ENCODE measurements at regions of chr5 and their contacts with region 1.

Region 1: GRCh38 chr5:78269088-78269703 is 25.3 kb downstream of the AP3B1 start:
- DNase-seq: no peak
- H3K4me3 Mint-ChIP-seq: no peak overlapping the region
- H3K27ac Mint-ChIP-seq: no peak overlapping the region
- H3K4me1 Mint-ChIP-seq: no peaks in the 10 kb centered on the region
- H3K27me3 Mint-ChIP-seq: no peaks in the 10 kb centered on the region

Region 2: DNA sequence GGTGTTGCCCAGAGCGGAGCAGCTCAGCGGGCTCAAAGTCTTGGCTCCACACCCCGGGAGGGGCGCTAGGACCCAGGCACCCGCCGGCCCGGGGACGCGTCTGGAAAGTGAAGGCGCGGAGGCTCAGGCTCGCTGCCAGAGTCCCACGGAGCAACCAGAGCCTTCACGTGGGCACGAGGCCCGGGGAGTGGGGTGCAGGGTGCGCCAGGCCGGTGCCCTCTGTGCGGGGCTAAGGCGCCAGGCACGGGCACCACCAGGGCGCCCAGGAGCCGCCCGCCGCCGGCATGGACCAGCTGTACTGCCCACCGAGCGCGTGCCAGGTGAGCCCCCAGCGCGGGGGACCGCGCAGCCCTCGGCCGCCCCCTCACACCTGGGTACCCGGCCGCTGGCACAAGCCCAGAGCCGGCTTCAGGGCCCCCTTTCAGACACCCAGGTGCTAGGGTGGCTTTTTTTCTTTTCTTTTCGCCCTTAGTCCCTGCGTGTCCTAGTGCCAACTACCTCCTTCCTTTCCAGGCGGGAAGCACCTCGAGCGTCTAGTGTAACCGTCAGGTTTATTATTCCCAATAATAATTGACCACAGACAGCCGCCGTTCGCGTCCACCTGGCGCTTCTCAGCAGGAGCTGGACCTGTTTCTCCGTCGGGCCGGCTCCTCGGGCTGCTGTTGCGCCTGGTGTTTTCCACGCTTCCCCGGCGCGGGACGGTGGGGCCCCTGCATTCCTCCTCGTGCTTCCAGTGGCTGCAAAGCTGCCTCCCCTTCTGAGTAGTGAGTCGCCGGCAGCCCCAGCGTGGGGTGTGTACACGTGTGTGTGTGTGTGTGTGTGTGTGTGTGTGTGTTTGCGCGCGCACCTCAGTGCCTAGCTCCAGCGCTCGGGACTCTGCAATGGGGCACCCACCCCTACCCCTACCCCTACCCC is 1088.8 kb before region 1 on chr5:
- intact Hi-C with region 1: no loop called
- DNase-seq: no peak
- H3K4me3 Mint-ChIP-seq: no peak overlapping the region
- H3K27ac Mint-ChIP-seq: no peak overlapping the region
- H3K4me1 Mint-ChIP-seq: no peaks in the 10 kb centered on the region
- H3K27me3 Mint-ChIP-seq: peaks cover 44% of the 10 kb centered on the region

Region 3: GRCh38 chr5:77867194-77867691 is 402.0 kb before region 1 on chr5:
- intact Hi-C with region 1: loop called (anchors 10 kb)
- DNase-seq: no peak
- H3K4me3 Mint-ChIP-seq: no peak overlapping the region
- H3K27ac Mint-ChIP-seq: no peak overlapping the region
- H3K4me1 Mint-ChIP-seq: no peaks in the 10 kb centered on the region
- H3K27me3 Mint-ChIP-seq: peaks cover 5% of the 10 kb centered on the region

Region 4: DNA sequence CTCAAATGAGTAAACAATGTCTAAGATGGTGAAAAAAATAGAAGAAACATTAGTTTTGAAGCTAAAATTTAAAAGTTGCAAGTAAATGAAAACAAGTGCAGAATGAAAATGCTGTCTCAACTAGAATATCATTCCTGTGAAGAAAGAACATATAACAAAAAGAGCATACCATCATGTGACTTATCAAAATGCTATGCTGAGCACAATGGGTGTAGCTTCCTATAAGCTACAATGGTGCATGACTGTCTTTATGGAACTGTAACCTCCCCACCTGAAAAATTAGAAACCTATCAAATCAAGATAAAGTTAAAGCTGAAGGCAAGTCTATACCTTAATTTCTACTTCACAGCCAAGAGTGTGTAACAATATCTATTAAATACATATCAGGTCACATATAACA is 166.7 kb before region 1 on chr5:
- intact Hi-C with region 1: no loop called
- DNase-seq: no peak
- H3K4me3 Mint-ChIP-seq: no peak overlapping the region
- H3K27ac Mint-ChIP-seq: no peak overlapping the region
- H3K4me1 Mint-ChIP-seq: no peaks in the 10 kb centered on the region
- H3K27me3 Mint-ChIP-seq: no peaks in the 10 kb centered on the region

Region 5: DNA sequence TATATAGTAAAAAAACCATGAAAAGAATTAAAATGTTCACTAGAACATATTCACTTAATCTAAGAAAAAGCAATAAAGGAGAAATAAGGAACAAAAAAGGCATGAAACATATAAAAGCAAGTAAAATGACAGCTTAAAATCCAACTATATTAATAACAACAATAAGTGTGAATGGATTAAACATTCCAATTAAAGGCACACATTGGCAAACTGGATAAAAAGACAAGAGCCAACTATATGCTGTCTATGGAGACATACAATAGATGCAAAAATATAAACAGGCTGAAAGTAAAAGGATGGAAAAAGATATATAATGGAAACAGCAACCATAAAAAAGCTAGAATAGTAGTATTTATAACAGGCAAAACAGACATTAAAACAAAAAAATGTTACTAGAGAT is 44.8 kb before region 1 on chr5:
- intact Hi-C with region 1: loop called (anchors 2 kb)
- DNase-seq: no peak
- H3K4me3 Mint-ChIP-seq: no peak overlapping the region
- H3K27ac Mint-ChIP-seq: no peak overlapping the region
- H3K4me1 Mint-ChIP-seq: peaks cover 9% of the 10 kb centered on the region
- H3K27me3 Mint-ChIP-seq: no peaks in the 10 kb centered on the region